ENCODE measurements at regions of chr22 and their contacts with region 1.

Region 1: DNA sequence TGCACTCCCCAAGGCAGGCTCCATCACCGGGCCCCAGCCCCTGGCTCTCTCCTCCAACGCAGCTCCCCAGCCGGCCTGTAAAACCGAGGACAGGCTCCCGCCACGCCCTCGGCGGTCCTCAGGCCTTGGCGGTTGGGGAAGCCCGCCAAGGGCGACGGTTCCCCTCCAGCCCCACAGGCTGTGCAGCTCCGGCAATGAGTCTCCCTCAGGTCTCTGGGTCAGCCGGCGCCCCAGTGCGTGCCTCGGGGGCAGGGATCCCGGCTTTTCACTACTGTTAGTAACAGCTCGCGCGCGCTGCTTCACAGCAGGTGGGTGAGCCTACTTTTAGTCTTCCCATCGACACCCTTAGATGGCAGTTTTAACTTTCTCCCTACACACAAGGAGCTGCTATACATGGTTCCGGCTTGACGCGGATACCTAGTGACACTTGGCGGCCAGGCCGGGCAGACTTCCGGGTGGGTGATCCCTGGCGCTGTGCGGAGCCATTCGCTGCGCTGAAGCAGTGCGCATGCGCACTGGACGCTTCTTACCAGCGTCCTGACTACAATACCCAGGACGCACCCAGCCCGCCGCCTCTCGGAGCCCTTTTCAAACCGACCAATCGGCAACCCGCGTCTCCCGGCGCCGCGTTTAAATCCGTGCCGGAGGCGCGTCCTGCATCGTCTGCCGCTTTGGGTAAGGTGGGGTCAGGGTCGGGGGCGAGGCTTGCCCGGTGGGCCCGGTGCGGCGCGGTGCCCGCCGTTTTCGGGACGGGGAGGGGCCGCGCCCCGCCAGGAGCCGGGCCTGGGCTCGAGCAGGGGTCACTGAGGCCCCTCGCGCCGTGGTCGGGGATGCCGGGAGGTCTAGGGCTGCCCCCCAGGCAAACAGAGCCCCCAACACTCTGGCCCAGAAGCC is at the start of gene GTSE1:
- DNase-seq: peak; percentile 99
- ATAC-seq: peak; percentile 99
- H3K4me3 Mint-ChIP-seq: peak within 1 kb of the TSS; percentile 90
- H3K27ac Mint-ChIP-seq: peak within 1 kb of the TSS; percentile 93
- H3K4me1 Mint-ChIP-seq: peaks cover 35% of the 10 kb centered on the region
- H3K27me3 Mint-ChIP-seq: peaks cover 4% of the 10 kb centered on the region
- total RNA-seq, gene GTSE1: 39.9 to 42.4 TPM

Region 2: GRCh38 chr22:46002757-46003270 is 293.7 kb before region 1 on chr22:
- CTCF ChIA-PET with region 1: no interaction called
- POLR2A ChIA-PET with region 1: no interaction called
- intact Hi-C with region 1: no loop called
- DNase-seq: no peak
- ATAC-seq: no peak
- H3K4me3 Mint-ChIP-seq: no peak overlapping the region
- H3K27ac Mint-ChIP-seq: no peak overlapping the region
- H3K4me1 Mint-ChIP-seq: peaks cover 7% of the 10 kb centered on the region
- H3K27me3 Mint-ChIP-seq: no peaks in the 10 kb centered on the region

Region 3: DNA sequence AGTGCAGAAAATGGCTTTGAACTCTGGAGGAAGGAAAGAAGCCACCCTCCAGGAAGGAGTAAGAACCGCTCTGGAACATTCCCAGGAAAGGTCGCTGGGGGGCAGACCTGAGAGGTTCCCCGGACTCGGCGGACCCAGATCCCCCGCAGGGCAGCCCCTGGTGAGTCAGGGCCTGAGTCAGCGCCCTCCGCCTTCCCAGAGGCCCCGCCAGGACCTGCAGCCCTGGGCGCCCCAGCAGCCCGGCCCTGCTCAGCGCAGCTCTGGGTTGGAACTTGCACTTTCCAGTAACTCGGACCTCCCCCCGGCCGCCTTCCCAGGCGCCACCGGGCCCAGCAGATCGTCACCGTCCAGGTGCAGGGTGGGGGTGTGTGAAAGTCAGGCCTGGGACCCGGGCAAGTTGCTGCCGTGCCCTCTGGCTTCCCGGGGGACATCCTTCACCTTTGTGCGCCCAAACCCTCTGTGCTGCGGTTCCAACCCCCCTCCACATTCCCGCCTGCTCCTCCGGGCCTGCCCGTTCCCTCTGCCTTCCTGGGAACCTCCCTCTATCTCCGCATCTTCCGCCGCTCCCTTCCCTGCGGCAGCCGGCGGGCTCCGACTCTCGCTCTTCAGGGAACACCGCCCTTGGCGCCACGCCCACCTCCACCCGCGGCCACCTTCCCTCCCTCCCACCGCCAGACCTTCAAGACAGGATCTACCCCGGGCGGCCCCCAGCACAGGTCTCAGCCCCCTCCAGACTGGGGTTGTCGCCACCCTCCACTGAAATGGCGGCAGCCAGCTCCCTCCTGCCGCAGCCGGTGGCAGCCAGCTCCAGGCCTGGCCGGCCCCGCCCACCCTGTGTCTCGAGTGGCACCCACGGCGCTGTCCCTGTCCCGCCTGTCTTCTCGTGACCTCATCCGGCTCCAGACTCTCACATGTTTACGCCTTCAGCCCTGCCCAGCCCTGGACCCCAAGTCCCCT is 282.8 kb before region 1 on chr22:
- CTCF ChIA-PET with region 1: no interaction called
- POLR2A ChIA-PET with region 1: no interaction called
- intact Hi-C with region 1: loop called in 1 of 2 experiments (anchors 1 kb)
- DNase-seq: peak; percentile 96
- ATAC-seq: peak; percentile 99
- H3K4me3 Mint-ChIP-seq: peak overlapping the region; percentile 80
- H3K27ac Mint-ChIP-seq: peak overlapping the region; percentile 86
- H3K4me1 Mint-ChIP-seq: peaks cover 4% of the 10 kb centered on the region
- H3K27me3 Mint-ChIP-seq: no peaks in the 10 kb centered on the region

Region 4: DNA sequence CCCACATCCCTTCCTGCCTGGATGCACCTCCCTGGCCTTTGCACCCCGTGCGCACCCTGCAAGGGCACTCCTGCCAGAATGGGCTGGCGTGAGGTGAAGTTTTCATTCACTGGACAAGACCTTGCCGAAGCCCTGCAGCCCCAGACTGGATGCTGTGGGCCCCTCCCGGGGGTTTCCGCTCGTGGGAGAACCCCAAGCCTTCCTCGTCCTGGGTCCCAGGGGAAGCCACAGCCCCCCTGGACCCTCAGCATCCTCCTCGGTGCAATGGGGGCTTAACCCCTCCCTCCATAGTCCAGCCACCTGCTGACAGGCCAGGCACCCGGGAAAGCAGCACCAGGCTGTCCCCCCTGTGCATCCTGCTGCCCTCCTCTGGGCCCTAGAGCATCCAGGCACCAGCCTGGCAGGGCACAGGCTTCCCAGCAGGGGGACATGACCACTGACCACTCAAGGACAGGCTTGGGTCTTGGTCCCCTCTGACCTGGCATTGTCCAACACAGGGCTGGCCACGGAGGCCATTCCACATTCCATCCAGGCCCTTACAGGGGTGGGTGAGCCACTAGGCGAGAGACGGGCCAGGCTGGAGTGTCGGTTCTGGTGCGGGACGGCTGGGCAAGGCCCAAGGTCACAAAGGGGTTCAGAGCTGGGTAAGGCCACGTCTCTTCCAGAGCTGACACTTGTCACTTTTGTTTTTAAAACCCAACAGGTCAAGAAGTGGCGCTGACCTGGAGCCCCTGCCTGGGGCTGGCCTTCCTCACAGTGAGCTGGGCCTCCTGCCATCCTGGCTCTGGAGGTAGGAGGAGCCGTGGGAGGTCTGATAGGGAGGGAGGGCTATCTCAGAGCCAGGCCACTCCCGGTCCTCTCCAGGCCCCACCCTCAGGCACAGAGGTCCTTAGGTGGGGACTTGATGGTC is 187.7 kb before region 1 on chr22:
- CTCF ChIA-PET with region 1: no interaction called
- POLR2A ChIA-PET with region 1: no interaction called
- intact Hi-C with region 1: no loop called
- DNase-seq: no peak
- ATAC-seq: no peak
- H3K4me3 Mint-ChIP-seq: no peak overlapping the region
- H3K27ac Mint-ChIP-seq: no peak overlapping the region
- H3K4me1 Mint-ChIP-seq: no peaks in the 10 kb centered on the region
- H3K27me3 Mint-ChIP-seq: no peaks in the 10 kb centered on the region

Region 5: DNA sequence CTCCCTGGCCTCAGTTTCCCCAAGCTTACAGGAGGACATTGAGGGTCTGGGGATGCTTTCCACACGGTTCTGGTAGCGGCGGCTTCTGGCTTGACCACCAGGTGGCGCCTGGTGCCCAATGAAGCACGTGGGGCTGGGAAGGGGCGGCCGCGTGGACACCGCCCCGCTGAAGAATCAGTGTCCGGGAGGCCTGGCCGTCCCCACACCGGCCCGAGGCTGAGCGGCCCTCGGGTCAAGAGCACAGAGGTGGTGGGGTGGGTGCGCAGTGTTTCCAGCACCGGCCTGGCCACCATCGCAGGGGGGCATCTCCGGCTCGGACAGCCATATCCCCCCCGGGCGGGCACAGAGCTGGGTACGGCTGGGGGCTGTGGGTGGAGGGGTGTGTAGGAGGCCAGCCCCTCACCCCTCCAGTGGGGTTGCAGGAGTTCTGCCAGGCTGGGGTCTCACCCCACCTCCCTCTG is 174.0 kb before region 1 on chr22:
- CTCF ChIA-PET with region 1: interaction called, 3 read pairs
- POLR2A ChIA-PET with region 1: no interaction called
- intact Hi-C with region 1: loop called (anchors 1 kb)
- DNase-seq: peak; percentile 86
- ATAC-seq: peak; percentile 81
- H3K4me3 Mint-ChIP-seq: no peak overlapping the region
- H3K27ac Mint-ChIP-seq: no peak overlapping the region
- H3K4me1 Mint-ChIP-seq: no peaks in the 10 kb centered on the region
- H3K27me3 Mint-ChIP-seq: no peaks in the 10 kb centered on the region

Region 6: DNA sequence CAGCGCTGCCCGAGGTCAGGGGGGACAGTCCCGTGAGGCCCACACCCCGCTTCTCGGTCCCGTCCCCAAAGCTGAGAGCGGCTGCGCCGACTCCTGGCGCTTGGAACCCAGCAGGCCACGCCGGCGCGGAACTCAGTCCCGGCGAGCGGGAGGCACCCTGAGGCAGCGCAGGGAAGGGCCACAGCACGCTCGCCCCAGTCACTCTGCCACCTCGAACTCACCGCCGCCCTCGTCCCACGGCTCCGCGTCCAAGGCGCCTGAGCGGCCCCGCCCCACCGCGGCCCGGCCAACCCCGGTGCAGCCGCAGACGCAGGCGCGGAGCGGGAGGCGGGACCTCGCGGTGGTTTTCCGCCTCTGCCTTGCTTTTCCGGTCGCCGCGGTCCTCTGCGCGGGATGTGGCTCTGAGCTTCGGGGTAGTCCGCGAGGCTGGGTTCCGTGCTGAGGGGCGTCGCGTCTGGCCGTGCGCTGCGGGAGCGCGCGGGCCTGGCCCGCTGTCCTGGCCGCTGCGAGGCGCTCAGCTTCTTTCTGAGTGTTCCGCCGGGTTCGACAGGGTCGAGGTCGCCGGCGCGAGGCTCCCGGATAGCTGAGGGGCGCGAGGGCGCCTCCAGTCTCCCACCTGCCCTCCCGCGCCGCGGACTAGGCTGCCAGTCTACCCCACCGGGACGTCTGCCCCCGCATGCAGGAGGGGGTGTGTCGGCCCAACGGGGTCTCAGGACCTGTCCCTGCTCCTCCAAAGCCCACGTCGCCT is 46.3 kb before region 1 on chr22 and contains the start of gene CDPF1:
- CTCF ChIA-PET with region 1: interaction called, 7 read pairs
- POLR2A ChIA-PET with region 1: interaction called, 7 read pairs
- intact Hi-C with region 1: loop called (anchors 1 kb)
- DNase-seq: peak; percentile 96
- ATAC-seq: peak; percentile 92
- H3K4me3 Mint-ChIP-seq: peak within 1 kb of the TSS; percentile 79
- H3K27ac Mint-ChIP-seq: peak within 1 kb of the TSS; percentile 80
- H3K4me1 Mint-ChIP-seq: peaks cover 25% of the 10 kb centered on the region
- H3K27me3 Mint-ChIP-seq: no peaks in the 10 kb centered on the region
- total RNA-seq, gene CDPF1: 8.1 to 8.8 TPM

Region 7: GRCh38 chr22:46323126-46323525 is 26.6 kb after region 1 on chr22:
- CTCF ChIA-PET with region 1: no interaction called
- POLR2A ChIA-PET with region 1: no interaction called
- intact Hi-C with region 1: no loop called
- DNase-seq: no peak
- ATAC-seq: no peak
- H3K4me3 Mint-ChIP-seq: no peak overlapping the region
- H3K27ac Mint-ChIP-seq: no peak overlapping the region
- H3K4me1 Mint-ChIP-seq: no peaks in the 10 kb centered on the region
- H3K27me3 Mint-ChIP-seq: no peaks in the 10 kb centered on the region

Region 8: GRCh38 chr22:46335201-46336118 is 39.0 kb after region 1 on chr22 and contains the start of gene TRMU:
- CTCF ChIA-PET with region 1: no interaction called
- POLR2A ChIA-PET with region 1: no interaction called
- intact Hi-C with region 1: loop called in 1 of 2 experiments (anchors 1 kb)
- DNase-seq: peak; percentile 86
- ATAC-seq: peak; percentile 89
- H3K4me3 Mint-ChIP-seq: peak within 1 kb of the TSS; percentile 99
- H3K27ac Mint-ChIP-seq: peak within 1 kb of the TSS; percentile 94
- H3K4me1 Mint-ChIP-seq: peaks cover 35% of the 10 kb centered on the region
- H3K27me3 Mint-ChIP-seq: no peaks in the 10 kb centered on the region
- total RNA-seq, gene TRMU: 61.4 to 75.3 TPM

Region 9: DNA sequence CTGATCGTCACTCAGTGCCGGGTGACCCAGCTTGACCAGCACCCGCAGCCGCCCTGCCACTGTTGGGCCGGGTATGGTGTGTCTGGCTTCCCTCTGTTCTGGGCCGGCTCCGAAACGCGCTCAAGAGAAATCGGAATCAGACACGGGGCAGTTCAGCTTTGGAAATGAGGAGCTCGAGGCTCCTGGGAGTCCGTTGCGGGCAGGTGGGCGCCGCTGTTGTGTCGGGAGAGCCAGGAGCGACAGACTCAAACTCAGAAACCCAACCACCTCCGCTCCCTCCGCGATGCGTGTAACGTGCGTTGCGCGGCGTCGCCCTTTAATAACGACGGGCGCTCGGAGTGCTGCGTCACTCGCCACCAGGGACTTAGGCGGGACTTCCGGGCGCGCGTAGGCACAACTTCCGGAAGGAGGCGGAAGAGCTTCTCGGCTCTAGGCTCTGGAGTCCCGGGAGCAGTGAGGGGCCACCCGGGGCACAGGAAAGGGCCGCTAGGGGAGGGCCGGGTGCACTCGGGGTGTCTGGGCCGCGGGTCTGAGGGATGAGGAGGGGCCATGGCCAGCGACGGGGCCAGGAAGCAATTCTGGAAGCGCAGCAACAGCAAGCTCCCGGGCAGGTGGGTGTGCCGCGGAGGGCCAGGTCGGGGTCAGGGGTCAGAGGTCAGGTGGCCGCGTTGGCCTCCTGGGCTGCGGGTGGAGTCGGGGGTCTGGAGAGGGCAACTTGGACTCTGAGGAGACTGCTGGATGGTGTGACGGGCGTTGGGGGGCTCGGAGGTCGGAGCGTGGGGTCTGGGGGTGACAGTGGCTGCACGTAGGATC is 465.9 kb after region 1 on chr22 and contains the start of gene TBC1D22A:
- CTCF ChIA-PET with region 1: no interaction called
- POLR2A ChIA-PET with region 1: no interaction called
- intact Hi-C with region 1: loop called in 1 of 2 experiments (anchors 1 kb)
- DNase-seq: peak; percentile 97
- ATAC-seq: peak; percentile 90
- H3K4me3 Mint-ChIP-seq: peak within 1 kb of the TSS; percentile 94
- H3K27ac Mint-ChIP-seq: peak within 1 kb of the TSS; percentile 99
- H3K4me1 Mint-ChIP-seq: peaks cover 58% of the 10 kb centered on the region
- H3K27me3 Mint-ChIP-seq: no peaks in the 10 kb centered on the region
- total RNA-seq, gene TBC1D22A: 36.0 to 38.0 TPM